T-cell (primary cell): ENCODE measurements at regions of chr10 and their contacts with region 1.

Region 1: GRCh38 chr10:63629363-63630084 is 108.3 kb downstream of the REEP3 start:
- DNase-seq: peak; percentile 47 to 85 (median 74)
- ATAC-seq: peak; percentile 60 to 69 (median 68)
- H3K4me3 ChIP-seq: peak overlapping the region; percentile 82 to 97
- H3K4me3 Mint-ChIP-seq: peak overlapping the region; percentile 89 to 94 (median 91)
- H3K27ac ChIP-seq: peak overlapping the region; percentile 51
- H3K27ac Mint-ChIP-seq: peak overlapping the region; percentile 87 to 90
- H3K4me1 ChIP-seq: peaks cover 19 to 24% of the 10 kb centered on the region in 2 experiments
- H3K4me1 Mint-ChIP-seq: peaks cover 22 to 31% (median 25%) of the 10 kb centered on the region in 3 donors
- H3K27me3 ChIP-seq: no peaks in the 10 kb centered on the region
- H3K27me3 Mint-ChIP-seq: no peaks in the 10 kb centered on the region

Region 2: DNA sequence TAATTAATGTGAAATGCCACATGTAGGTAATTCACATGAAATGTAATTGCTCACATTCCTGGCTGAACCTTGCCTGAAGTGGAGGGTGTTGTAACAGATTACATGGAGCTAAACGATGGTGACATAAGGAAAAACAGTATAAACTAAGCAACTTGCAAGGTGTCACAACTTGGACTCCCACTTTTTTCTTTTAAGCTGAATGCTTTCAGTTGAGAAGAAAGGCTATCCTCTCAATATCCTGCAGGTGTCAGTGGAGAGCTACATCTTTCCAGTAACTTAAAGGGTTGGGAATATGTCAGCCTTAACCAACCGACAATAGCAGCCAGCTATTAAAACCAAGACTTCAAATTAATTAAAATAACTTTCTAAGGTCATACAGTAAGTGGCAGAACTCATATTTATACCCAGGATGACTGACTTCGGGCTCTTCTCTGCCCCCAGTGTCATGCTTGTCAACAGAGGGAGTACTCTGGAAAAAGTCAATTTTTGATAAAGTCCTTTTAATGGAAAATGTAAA is 462.7 kb before region 1 on chr10:
- CTCF ChIA-PET with region 1: interaction called, 28 to 98 read pairs
- POLR2A ChIA-PET with region 1: interaction called, 3 to 8 read pairs
- DNase-seq: peak in 13 of 35 experiments; percentile 4 to 80 (median 19)
- ATAC-seq: peak; percentile 69 to 74 (median 70)
- H3K4me3 ChIP-seq: no peak overlapping the region
- H3K4me3 Mint-ChIP-seq: no peak overlapping the region
- H3K27ac ChIP-seq: no peak overlapping the region
- H3K27ac Mint-ChIP-seq: no peak overlapping the region
- H3K4me1 ChIP-seq: no peaks in the 10 kb centered on the region
- H3K4me1 Mint-ChIP-seq: peaks cover 2 to 3% (median 3%) of the 10 kb centered on the region in 3 donors
- H3K27me3 ChIP-seq: no peaks in the 10 kb centered on the region
- H3K27me3 Mint-ChIP-seq: no peaks in the 10 kb centered on the region

Region 3: GRCh38 chr10:63217120-63217605 is 412.4 kb before region 1 on chr10:
- CTCF ChIA-PET with region 1: interaction called, 17 to 28 read pairs
- POLR2A ChIA-PET with region 1: no interaction called
- DNase-seq: peak in 8 of 35 experiments; percentile 6 to 73 (median 24)
- ATAC-seq: peak; percentile 77 to 85 (median 80)
- H3K4me3 ChIP-seq: no peak overlapping the region
- H3K4me3 Mint-ChIP-seq: no peak overlapping the region
- H3K27ac ChIP-seq: no peak overlapping the region
- H3K27ac Mint-ChIP-seq: peak overlapping the region; percentile 55 to 73
- H3K4me1 ChIP-seq: peaks cover 6 to 19% of the 10 kb centered on the region in 2 experiments
- H3K4me1 Mint-ChIP-seq: peaks cover 55 to 64% (median 62%) of the 10 kb centered on the region in 3 donors
- H3K27me3 ChIP-seq: no peaks in the 10 kb centered on the region
- H3K27me3 Mint-ChIP-seq: no peaks in the 10 kb centered on the region

Region 4: DNA sequence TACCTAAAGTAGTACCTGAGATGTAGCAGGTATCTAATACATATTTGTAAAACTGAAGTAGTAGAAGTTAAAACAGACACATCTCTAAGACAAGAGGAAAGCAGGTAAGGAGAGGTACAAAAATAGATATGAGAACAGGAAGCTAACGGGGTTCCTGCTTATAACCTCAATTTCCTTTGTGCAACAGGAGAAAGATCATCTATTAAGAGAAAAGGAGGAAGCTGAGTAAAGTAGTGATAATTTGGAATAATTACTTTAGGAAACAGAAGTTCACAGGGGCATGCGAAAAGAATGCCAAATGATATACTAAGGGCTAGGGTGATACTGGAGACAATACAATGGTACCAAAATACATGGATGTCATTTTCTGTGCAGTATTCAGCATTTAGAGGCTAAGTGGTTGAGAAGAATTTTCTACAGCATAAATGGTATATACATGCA is 387.7 kb before region 1 on chr10:
- CTCF ChIA-PET with region 1: no interaction called
- POLR2A ChIA-PET with region 1: interaction called in 1 of 2 experiments, 13 read pairs
- DNase-seq: peak in 1 of 35 experiments; percentile 34
- ATAC-seq: peak; percentile 56 to 79 (median 68)
- H3K4me3 ChIP-seq: peak overlapping the region in 1 of 2 donors; percentile 23
- H3K4me3 Mint-ChIP-seq: peak overlapping the region; percentile 39 to 69 (median 66)
- H3K27ac ChIP-seq: peak overlapping the region; percentile 39
- H3K27ac Mint-ChIP-seq: peak overlapping the region; percentile 84 to 90
- H3K4me1 ChIP-seq: peaks cover 37 to 48% of the 10 kb centered on the region in 2 experiments
- H3K4me1 Mint-ChIP-seq: peaks cover 78 to 86% (median 81%) of the 10 kb centered on the region in 3 donors
- H3K27me3 ChIP-seq: no peaks in the 10 kb centered on the region
- H3K27me3 Mint-ChIP-seq: no peaks in the 10 kb centered on the region

Region 5: DNA sequence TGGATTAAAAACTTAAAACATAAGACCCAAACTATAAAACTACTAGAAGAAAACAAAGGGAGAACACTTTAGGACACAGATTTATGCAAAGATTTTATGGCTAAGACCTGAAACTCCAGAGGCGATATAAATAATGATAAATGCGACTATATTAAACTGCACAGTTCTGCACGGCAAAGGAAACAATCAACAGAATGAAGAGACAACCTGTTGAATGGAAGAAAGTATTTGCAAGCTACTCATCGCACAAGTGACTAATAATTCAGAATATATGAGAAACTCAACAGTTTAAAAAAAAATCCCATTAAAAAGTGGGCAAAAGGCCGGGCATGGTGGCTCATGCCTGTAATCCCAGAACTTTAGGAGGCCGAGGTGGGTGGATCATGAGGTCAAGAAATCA is 237.3 kb before region 1 on chr10:
- CTCF ChIA-PET with region 1: no interaction called
- POLR2A ChIA-PET with region 1: interaction called in 1 of 2 experiments, 17 read pairs
- DNase-seq: no peak
- ATAC-seq: no peak
- H3K4me3 ChIP-seq: no peak overlapping the region
- H3K4me3 Mint-ChIP-seq: peak overlapping the region in 2 of 3 donors; percentile 24 to 25
- H3K27ac ChIP-seq: no peak overlapping the region
- H3K27ac Mint-ChIP-seq: peak overlapping the region; percentile 4 to 6
- H3K4me1 ChIP-seq: peaks cover 8% of the 10 kb centered on the region in 2 experiments
- H3K4me1 Mint-ChIP-seq: peaks cover 45 to 59% (median 50%) of the 10 kb centered on the region in 3 donors
- H3K27me3 ChIP-seq: no peaks in the 10 kb centered on the region
- H3K27me3 Mint-ChIP-seq: no peaks in the 10 kb centered on the region

Region 6: GRCh38 chr10:63666836-63667383 is 37.4 kb after region 1 on chr10:
- CTCF ChIA-PET with region 1: no interaction called
- POLR2A ChIA-PET with region 1: no interaction called
- DNase-seq: no peak
- ATAC-seq: no peak
- H3K4me3 ChIP-seq: no peak overlapping the region
- H3K4me3 Mint-ChIP-seq: no peak overlapping the region
- H3K27ac ChIP-seq: no peak overlapping the region
- H3K27ac Mint-ChIP-seq: no peak overlapping the region
- H3K4me1 ChIP-seq: no peaks in the 10 kb centered on the region
- H3K4me1 Mint-ChIP-seq: no peaks in the 10 kb centered on the region
- H3K27me3 ChIP-seq: no peaks in the 10 kb centered on the region
- H3K27me3 Mint-ChIP-seq: no peaks in the 10 kb centered on the region

Region 7: DNA sequence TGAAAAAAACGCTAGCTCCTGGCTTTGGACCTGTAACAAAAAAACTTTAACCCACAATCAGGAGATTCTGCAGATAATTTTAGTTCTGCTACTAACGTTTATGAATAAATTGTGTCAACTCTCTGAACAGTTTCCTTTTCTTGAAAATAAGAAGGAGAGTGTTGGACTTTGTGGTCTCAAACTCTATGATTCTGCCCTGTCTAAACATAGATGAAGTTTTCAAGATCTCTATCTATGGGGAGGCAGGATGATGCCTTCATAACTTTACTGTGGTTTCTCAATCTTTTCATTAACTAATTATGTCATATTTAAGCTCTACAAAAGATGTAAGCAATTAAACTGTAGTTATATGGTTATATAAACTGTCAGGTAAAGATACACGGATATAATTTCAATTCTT is 53.7 kb after region 1 on chr10:
- CTCF ChIA-PET with region 1: no interaction called
- POLR2A ChIA-PET with region 1: interaction called in 1 of 2 experiments, 11 read pairs
- DNase-seq: no peak
- ATAC-seq: no peak
- H3K4me3 ChIP-seq: no peak overlapping the region
- H3K4me3 Mint-ChIP-seq: no peak overlapping the region
- H3K27ac ChIP-seq: no peak overlapping the region
- H3K27ac Mint-ChIP-seq: no peak overlapping the region
- H3K4me1 ChIP-seq: no peaks in the 10 kb centered on the region
- H3K4me1 Mint-ChIP-seq: peaks cover 0 to 11% (median 3%) of the 10 kb centered on the region in 3 donors
- H3K27me3 ChIP-seq: no peaks in the 10 kb centered on the region
- H3K27me3 Mint-ChIP-seq: peaks cover 2 to 10% of the 10 kb centered on the region in 2 donors

Region 8: GRCh38 chr10:63720072-63720537 is 90.6 kb after region 1 on chr10:
- CTCF ChIA-PET with region 1: interaction called, 10 to 23 read pairs
- POLR2A ChIA-PET with region 1: interaction called in 1 of 2 experiments, 12 read pairs
- DNase-seq: peak in 29 of 35 experiments; percentile 7 to 77 (median 29)
- ATAC-seq: peak; percentile 66 to 85 (median 66)
- H3K4me3 ChIP-seq: no peak overlapping the region
- H3K4me3 Mint-ChIP-seq: no peak overlapping the region
- H3K27ac ChIP-seq: no peak overlapping the region
- H3K27ac Mint-ChIP-seq: no peak overlapping the region
- H3K4me1 ChIP-seq: peaks cover 4 to 9% of the 10 kb centered on the region in 2 experiments
- H3K4me1 Mint-ChIP-seq: peaks cover 7 to 11% (median 8%) of the 10 kb centered on the region in 3 donors
- H3K27me3 ChIP-seq: peaks cover 0 to 15% of the 10 kb centered on the region in 2 experiments
- H3K27me3 Mint-ChIP-seq: peaks cover 3 to 8% of the 10 kb centered on the region in 2 donors